ENCODE measurements at regions of chr2 and their contacts with region 1.

Region 1: GRCh38 chr2:176206682-176207081 is 18.2 kb downstream of the HOXD1 start:
- DNase-seq: no peak
- H3K4me3 Mint-ChIP-seq: no peak overlapping the region
- H3K27ac Mint-ChIP-seq: no peak overlapping the region
- H3K4me1 Mint-ChIP-seq: no peaks in the 10 kb centered on the region
- H3K27me3 Mint-ChIP-seq: no peaks in the 10 kb centered on the region
- CTCF ChIP-seq: no peak

Region 2: DNA sequence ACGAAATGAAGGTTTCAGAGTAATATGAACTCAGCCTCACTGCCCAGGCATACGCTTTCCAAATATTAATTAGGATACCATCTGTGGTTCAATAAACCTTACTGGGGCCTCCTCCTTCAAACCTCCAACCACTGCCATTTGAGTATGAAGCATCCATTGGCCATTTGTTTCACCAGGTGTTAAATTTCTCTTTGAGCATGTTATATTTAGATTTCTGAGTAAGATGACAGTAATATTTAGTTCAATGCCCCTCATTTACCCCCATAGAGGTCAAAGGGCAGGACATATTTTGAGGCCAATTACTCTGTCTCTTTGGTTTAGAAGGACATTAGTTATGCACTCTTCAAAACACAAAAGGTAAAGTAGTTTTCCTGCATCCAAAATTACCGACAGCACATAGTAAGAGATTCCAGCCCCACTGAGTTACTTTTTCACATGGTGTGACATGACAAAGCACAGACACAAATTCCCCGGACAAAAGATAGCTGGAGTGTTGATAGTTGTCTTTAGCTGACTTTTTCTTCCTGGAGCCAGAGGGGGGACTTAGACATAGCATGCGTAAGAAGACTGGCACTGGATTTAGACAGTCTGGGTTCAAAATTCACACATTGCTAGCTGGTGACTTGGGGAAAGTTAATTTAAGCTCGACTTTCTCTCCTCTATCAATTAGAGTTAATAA is 171.5 kb before region 1 on chr2:
- CTCF ChIA-PET with region 1: no interaction called
- POLR2A ChIA-PET with region 1: no interaction called
- intact Hi-C with region 1: no loop called
- DNase-seq: no peak
- H3K4me3 Mint-ChIP-seq: no peak overlapping the region
- H3K27ac Mint-ChIP-seq: no peak overlapping the region
- H3K4me1 Mint-ChIP-seq: no peaks in the 10 kb centered on the region
- H3K27me3 Mint-ChIP-seq: peaks cover 39% of the 10 kb centered on the region
- CTCF ChIP-seq: no peak

Region 3: GRCh38 chr2:176174824-176175708 is 31.6 kb before region 1 on chr2:
- CTCF ChIA-PET with region 1: no interaction called
- POLR2A ChIA-PET with region 1: no interaction called
- intact Hi-C with region 1: no loop called
- DNase-seq: no peak
- H3K4me3 Mint-ChIP-seq: no peak overlapping the region
- H3K27ac Mint-ChIP-seq: no peak overlapping the region
- H3K4me1 Mint-ChIP-seq: no peaks in the 10 kb centered on the region
- H3K27me3 Mint-ChIP-seq: peaks cover 10% of the 10 kb centered on the region
- CTCF ChIP-seq: no peak

Region 4: GRCh38 chr2:176187899-176188773 is 18.5 kb before region 1 on chr2 and contains the start of gene HOXD1:
- CTCF ChIA-PET with region 1: interaction called, 3 read pairs
- POLR2A ChIA-PET with region 1: interaction called, 4 read pairs
- intact Hi-C with region 1: loop called (anchors 1 kb)
- DNase-seq: no peak
- H3K4me3 Mint-ChIP-seq: peak within 1 kb of the TSS; percentile 41
- H3K27ac Mint-ChIP-seq: no peak within 1 kb of the TSS
- H3K4me1 Mint-ChIP-seq: no peaks in the 10 kb centered on the region
- H3K27me3 Mint-ChIP-seq: no peaks in the 10 kb centered on the region
- CTCF ChIP-seq: no peak
- total RNA-seq, gene HOXD1: not detected in 2 replicates